ENCODE measurements at regions of chr3 and their contacts with region 1.

Region 1: DNA sequence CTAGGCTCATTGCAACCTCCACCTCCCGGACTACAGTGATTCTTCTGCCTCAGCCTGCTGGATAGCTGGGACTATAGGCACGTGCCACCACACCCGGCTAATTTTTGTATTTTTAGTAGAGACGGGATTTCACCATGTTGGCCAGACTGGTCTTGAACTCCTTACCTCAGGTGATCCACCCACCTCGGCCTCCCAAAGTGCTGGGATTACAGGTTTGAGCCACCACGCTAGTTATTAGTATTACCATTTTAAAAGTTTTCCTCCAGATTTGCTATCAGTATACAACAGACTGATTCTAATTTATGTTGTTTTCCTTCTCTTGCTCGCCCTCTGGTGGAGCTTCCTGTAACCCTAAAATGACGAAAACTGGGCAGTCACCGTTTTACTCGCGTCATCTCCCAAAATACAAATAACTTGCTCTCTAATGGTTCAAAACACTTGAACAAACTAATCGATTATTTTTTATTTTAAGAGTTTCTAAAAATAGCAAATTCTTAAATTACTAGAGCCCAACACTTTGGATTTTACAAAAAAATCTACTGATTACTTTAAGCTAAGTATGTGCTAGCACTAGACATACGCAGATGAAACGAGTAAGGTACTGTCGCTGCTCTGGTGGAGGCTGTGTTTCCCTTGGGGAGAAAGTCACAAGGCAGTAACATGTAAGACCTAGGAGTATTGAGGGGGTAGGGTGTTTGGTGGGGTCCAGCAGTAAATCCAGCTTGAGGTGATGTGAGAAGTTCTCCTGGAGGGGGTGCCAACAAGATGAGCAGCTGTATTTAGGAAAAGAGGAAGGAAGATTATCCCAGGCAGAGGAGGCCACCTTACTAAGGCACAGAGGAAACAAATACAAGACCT is 203.3 kb downstream of the MBNL1 start:
- DNase-seq: peak; percentile 83
- ATAC-seq: peak; percentile 80
- H3K4me3 Mint-ChIP-seq: peak overlapping the region; percentile 39
- H3K27ac Mint-ChIP-seq: peak overlapping the region; percentile 55
- H3K4me1 Mint-ChIP-seq: peaks cover 10% of the 10 kb centered on the region
- H3K27me3 Mint-ChIP-seq: no peaks in the 10 kb centered on the region

Region 2: GRCh38 chr3:152071924-152072323 is 400.1 kb before region 1 on chr3:
- CTCF ChIA-PET with region 1: interaction called, 19 read pairs
- POLR2A ChIA-PET with region 1: no interaction called
- intact Hi-C with region 1: loop called (anchors 1 kb)
- DNase-seq: peak; percentile 14
- ATAC-seq: peak; percentile 87
- H3K4me3 Mint-ChIP-seq: no peak overlapping the region
- H3K27ac Mint-ChIP-seq: no peak overlapping the region
- H3K4me1 Mint-ChIP-seq: peaks cover 2% of the 10 kb centered on the region
- H3K27me3 Mint-ChIP-seq: no peaks in the 10 kb centered on the region

Region 3: DNA sequence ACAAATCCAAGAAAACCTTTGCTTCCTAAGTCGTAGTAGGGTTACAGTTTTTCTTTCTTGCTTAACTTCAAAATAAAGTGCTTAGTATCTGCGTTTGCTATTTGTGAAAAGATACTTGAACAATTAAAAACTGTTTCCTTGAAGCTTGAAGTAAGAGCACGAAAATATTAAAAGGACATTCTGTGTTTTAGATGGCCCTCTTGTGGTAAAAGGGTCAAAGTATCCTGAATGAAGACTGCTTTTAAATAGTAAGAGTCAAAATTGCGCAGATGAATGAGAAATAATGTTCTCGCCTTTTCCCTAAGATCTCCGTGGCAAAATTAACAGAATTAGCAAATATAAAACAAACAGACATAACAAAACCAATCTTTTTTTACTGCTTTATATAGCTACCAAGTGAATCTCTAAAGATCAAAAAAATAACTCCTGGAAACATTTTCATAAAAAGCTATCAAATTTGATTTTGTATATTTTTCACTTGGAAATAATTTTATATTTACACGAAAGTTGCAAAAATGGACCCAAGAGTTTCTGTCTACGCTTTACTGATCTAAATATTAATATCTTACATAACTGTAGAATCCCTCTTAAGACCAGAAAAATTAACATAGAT is 27.9 kb before region 1 on chr3:
- CTCF ChIA-PET with region 1: interaction called, 22 read pairs
- POLR2A ChIA-PET with region 1: no interaction called
- intact Hi-C with region 1: no loop called
- DNase-seq: no peak
- ATAC-seq: no peak
- H3K4me3 Mint-ChIP-seq: no peak overlapping the region
- H3K27ac Mint-ChIP-seq: peak overlapping the region; percentile 43
- H3K4me1 Mint-ChIP-seq: peaks cover 64% of the 10 kb centered on the region
- H3K27me3 Mint-ChIP-seq: no peaks in the 10 kb centered on the region

Region 4: GRCh38 chr3:152524198-152525140 is 52.4 kb after region 1 on chr3:
- CTCF ChIA-PET with region 1: interaction called, 16 read pairs
- POLR2A ChIA-PET with region 1: no interaction called
- intact Hi-C with region 1: loop called (anchors 1 kb)
- DNase-seq: peak; percentile 63
- ATAC-seq: peak; percentile 58
- H3K4me3 Mint-ChIP-seq: no peak overlapping the region
- H3K27ac Mint-ChIP-seq: no peak overlapping the region
- H3K4me1 Mint-ChIP-seq: no peaks in the 10 kb centered on the region
- H3K27me3 Mint-ChIP-seq: no peaks in the 10 kb centered on the region

Region 5: GRCh38 chr3:152834776-152835600 is 362.9 kb after region 1 on chr3 and contains the start of gene P2RY1:
- CTCF ChIA-PET with region 1: no interaction called
- POLR2A ChIA-PET with region 1: no interaction called
- intact Hi-C with region 1: loop called in 1 of 2 experiments (anchors 10 kb)
- DNase-seq: peak; percentile 72
- ATAC-seq: peak; percentile 83
- H3K4me3 Mint-ChIP-seq: peak within 1 kb of the TSS; percentile 82
- H3K27ac Mint-ChIP-seq: peak within 1 kb of the TSS; percentile 73
- H3K4me1 Mint-ChIP-seq: peaks cover 15% of the 10 kb centered on the region
- H3K27me3 Mint-ChIP-seq: peaks cover 30% of the 10 kb centered on the region
- total RNA-seq, gene P2RY1: 1.1 to 1.8 TPM